RWPE1 (cell line): ENCODE measurements at regions of chr16 and their contacts with region 1.

Region 1: GRCh38 chr16:66894948-66895688 is 14.8 kb downstream of the PDP2 start:
- DNase-seq: peak; percentile 67
- H3K27ac ChIP-seq: peak overlapping the region; percentile 70
- CTCF ChIP-seq: peak; percentile 87

Region 2: DNA sequence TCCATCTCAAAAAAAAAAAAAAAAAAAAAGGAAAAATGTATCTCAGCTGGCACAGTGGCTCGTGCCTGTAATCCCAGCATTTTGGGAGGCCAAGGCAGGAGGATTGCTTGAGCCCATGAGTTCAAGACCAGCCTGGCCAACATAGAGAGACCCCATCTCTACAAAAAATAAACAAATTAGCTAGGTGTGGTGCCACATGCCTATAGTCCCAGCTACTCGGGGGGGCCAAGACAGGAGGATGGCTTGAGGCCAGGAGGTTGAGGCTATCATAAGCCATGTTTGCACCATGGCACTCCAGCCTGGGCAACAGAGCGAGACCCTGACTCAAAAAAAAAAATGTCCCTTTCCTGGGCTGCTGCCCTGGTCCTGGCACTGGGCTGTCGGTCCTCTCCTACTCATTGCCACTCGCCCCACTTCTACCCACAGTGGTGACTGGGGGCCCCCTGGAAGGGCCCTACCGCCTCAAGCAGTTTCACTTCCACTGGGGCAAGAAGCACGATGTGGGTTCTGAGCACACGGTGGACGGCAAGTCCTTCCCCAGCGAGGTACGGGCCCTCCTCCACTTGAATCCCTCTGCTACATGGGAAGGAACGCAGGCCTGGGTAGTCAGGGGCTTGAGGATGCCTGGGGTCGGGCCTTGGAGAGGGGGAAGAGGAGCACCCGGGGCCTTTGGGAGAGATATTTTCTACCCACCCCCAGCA is 44.9 kb before region 1 on chr16:
- CTCF ChIA-PET with region 1: no interaction called
- POLR2A ChIA-PET with region 1: no interaction called
- DNase-seq: no peak
- H3K27ac ChIP-seq: no peak overlapping the region
- CTCF ChIP-seq: no peak

Region 3: GRCh38 chr16:66905633-66906539 is 10.8 kb after region 1 on chr16:
- CTCF ChIA-PET with region 1: interaction called, 23 read pairs
- POLR2A ChIA-PET with region 1: no interaction called
- DNase-seq: peak; percentile 64
- H3K27ac ChIP-seq: no peak overlapping the region
- CTCF ChIP-seq: no peak

Region 4: GRCh38 chr16:66911112-66911511 is 16.0 kb after region 1 on chr16:
- CTCF ChIA-PET with region 1: interaction called, 22 read pairs
- POLR2A ChIA-PET with region 1: no interaction called
- DNase-seq: peak; percentile 65
- H3K27ac ChIP-seq: no peak overlapping the region
- CTCF ChIP-seq: no peak

Region 5: GRCh38 chr16:66918803-66919568 is 23.9 kb after region 1 on chr16 and contains the start of gene CDH16:
- CTCF ChIA-PET with region 1: interaction called, 15 read pairs
- POLR2A ChIA-PET with region 1: no interaction called
- DNase-seq: no peak
- H3K27ac ChIP-seq: no peak within 1 kb of the TSS
- CTCF ChIP-seq: no peak

Region 6: GRCh38 chr16:66928702-66929388 is 33.7 kb after region 1 on chr16:
- CTCF ChIA-PET with region 1: interaction called, 18 read pairs
- POLR2A ChIA-PET with region 1: no interaction called
- DNase-seq: no peak
- H3K27ac ChIP-seq: peak overlapping the region; percentile 60
- CTCF ChIP-seq: no peak; the same call in 1 of the 2 replicates

Region 7: DNA sequence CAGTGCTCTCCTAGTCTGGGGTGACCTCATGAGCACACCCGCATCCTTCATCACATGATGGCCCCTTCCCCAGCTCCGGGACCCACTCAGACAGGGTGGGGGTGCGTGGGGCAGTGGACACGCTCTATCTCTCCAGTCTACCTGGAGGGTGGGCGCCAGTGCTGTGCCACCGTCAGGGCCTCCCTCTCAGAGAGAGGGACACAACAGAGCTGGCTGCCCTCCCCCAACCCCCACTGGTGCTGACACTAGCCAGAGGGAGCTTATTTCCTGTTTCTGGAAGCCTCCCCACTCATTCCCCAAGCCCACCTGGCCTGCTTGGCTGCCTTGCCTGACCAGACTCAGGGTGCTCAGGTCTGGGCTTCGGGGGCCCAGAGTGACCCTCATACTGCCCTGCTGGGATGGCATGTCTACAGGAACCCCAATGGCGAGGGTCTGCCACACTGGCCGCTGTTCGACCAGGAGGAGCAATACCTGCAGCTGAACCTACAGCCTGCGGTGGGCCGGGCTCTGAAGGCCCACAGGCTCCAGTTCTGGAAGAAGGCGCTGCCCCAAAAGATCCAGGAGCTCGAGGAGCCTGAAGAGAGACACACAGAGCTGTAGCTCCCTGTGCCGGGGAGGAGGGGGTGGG is 48.4 kb after region 1 on chr16:
- CTCF ChIA-PET with region 1: interaction called, 12 read pairs
- POLR2A ChIA-PET with region 1: no interaction called
- DNase-seq: no peak
- H3K27ac ChIP-seq: peak overlapping the region; percentile 24
- CTCF ChIP-seq: no peak